ENCODE measurements at regions of chr12 and their contacts with region 1.

Region 1: DNA sequence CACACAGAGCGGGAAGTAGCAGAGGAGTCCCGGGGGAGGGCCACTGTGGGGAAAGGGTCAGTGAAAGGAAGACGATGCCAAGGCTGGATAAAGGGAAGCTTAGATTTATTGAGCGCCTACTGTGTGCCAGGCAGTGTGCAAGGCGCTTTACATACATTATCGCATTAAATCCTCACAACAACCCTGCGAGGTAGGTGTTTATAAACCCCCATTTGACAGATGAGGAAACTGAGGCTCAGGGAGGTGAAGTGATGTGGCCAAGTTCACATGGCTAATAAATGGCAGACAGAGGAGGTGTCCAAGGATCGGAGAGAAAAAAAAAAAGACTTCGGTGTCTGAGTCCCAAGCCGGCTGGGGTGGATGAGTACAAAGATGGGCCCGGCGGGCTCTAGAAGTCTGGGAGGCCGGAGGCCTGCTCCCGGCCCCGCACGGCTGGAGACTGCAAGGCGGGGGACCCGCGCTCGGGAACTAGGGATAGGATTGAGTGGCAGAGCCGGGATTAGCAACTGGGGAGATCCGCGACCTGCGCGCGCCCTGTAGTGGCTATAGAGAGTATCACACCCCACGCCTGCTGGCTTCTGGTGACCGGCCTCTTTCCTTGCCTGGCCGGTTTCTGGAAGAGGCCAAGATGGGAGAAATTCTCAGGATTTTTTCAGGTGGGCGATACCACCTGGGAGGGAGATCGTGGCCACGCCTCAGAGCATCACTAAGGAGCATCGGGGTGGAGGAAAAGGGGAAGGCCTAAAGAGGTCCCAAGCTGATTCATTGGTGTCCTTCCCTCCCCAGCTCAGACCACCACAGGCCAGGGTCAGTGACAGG is 3.9 kb downstream of the DDN start:
- DNase-seq: peak; percentile 93
- ATAC-seq: peak; percentile 69
- H3K4me3 Mint-ChIP-seq: peak overlapping the region; percentile 46
- H3K27ac Mint-ChIP-seq: no peak overlapping the region
- H3K4me1 Mint-ChIP-seq: peaks cover 24% of the 10 kb centered on the region
- H3K27me3 Mint-ChIP-seq: peaks cover 76% of the 10 kb centered on the region
- CTCF ChIP-seq: peak; percentile 58

Region 2: GRCh38 chr12:48890657-48891418 is 104.4 kb before region 1 on chr12:
- CTCF ChIA-PET with region 1: interaction called, 36 read pairs
- POLR2A ChIA-PET with region 1: no interaction called
- DNase-seq: peak; percentile 92
- ATAC-seq: peak; percentile 95
- H3K4me3 Mint-ChIP-seq: peak overlapping the region; percentile 70
- H3K27ac Mint-ChIP-seq: no peak overlapping the region
- H3K4me1 Mint-ChIP-seq: peaks cover 7% of the 10 kb centered on the region
- H3K27me3 Mint-ChIP-seq: peaks cover 28% of the 10 kb centered on the region
- CTCF ChIP-seq: peak; percentile 92

Region 3: DNA sequence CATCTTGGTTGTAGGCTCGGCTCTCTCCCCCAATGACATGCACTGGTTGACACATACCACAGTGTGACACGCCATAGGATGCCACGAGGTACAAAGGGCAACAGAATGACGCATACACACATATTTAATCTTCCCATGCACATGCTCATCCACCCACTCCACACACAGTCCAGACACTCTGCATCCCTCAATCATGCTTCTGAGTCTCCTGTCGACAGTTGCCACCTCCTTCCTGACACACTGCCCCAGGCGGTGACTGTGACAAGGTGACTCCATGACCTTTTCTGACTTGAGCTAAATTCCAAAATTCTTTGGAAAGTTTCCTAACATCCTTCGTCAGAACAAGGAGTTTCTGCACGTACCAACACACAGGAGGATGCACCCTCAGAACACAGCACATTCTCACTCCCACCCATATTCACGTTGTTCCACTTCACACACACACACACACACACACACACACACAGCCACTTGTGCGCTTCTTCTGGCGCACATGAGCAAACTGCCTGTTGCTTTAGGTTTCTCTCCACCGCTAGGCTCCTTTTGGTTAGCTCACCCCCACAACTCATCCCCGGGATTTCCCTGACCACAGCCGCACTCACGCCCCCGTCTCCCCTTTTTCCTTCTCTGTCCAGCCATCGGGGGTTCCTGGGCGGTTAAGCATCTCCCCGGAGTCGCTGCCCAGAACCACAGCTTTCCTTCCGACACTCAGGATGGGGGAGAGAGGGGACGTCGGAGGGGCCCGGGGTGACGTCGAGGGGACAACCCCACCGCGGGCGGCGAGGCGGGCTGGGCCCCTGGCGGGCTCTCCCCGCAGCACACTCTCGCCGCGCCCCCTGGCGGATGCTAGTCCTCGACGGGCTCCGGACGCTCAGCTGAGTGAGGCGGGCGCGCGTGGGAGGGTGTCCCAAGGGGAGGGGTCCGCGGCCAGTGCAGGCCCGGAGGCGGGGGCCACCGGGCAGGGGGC is 17.7 kb before region 1 on chr12:
- CTCF ChIA-PET with region 1: interaction called, 237 read pairs
- POLR2A ChIA-PET with region 1: interaction called, 3 read pairs
- DNase-seq: peak; percentile 75
- ATAC-seq: peak; percentile 3
- H3K4me3 Mint-ChIP-seq: peak overlapping the region; percentile 45
- H3K27ac Mint-ChIP-seq: no peak overlapping the region
- H3K4me1 Mint-ChIP-seq: peaks cover 31% of the 10 kb centered on the region
- H3K27me3 Mint-ChIP-seq: peaks cover 100% of the 10 kb centered on the region
- CTCF ChIP-seq: peak; percentile 77; the same call in 1 of the 2 replicates

Region 4: DNA sequence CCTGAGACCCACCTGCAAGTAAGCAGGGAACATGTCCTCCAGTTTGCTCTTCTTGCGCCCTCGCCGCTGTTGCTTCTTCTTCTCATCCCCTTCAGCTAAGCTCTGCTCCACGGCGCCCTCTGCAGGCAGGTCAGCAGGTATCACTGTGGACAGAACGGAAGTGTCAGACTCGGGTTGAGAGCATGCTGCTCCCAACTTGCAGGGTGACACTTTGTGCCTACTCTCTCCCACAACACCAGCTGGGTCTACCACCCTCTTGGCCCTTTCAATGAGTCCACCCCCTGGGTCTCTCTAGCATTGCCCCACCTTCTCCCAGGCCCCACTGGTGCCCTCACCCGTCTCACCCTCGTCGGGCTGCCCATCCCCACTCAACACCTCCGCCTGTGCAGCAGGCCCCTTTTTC is 48.6 kb after region 1 on chr12:
- CTCF ChIA-PET with region 1: interaction called, 37 read pairs
- POLR2A ChIA-PET with region 1: no interaction called
- DNase-seq: peak; percentile 91
- ATAC-seq: peak; percentile 86
- H3K4me3 Mint-ChIP-seq: no peak overlapping the region
- H3K27ac Mint-ChIP-seq: no peak overlapping the region
- H3K4me1 Mint-ChIP-seq: no peaks in the 10 kb centered on the region
- H3K27me3 Mint-ChIP-seq: no peaks in the 10 kb centered on the region
- CTCF ChIP-seq: peak; percentile 76

Region 5: DNA sequence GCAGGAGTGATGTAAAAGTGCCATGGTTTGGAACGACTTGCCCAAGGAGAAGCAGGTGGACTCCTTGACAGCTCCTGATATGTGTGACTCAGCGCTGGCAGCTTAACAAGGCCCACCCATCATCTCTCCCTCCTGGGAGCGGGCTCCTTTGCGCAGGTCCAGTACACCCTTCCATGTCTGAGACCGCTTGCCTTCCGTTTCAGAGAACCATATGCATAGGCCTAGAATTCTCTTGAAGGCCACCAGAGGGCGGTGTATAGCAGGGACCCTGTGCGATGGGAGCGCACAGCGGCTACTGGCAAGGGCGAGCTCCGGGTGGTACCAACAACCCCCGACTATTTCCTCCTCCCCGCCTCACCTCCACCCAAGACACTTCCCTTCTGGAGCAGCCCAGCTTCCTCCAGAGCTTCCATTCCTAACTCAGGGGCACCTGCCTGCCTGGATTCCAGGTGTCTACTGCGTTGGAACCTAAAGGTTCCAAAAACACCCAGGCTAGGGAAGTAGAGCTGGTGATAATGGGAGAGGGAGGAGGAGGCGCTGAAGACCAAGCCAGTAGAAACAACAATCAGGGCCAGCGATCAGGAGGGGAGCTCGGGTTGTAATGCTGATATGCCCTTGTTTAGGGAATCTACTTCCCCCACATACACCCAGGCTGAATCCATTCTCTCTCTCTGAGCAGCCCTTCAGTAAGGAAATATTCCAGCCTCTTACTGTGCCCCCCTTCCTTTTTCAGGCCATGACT is 93.1 kb after region 1 on chr12:
- CTCF ChIA-PET with region 1: interaction called, 41 read pairs
- POLR2A ChIA-PET with region 1: no interaction called
- DNase-seq: peak; percentile 75
- ATAC-seq: peak; percentile 78
- H3K4me3 Mint-ChIP-seq: peak overlapping the region; percentile 50
- H3K27ac Mint-ChIP-seq: no peak overlapping the region
- H3K4me1 Mint-ChIP-seq: peaks cover 40% of the 10 kb centered on the region
- H3K27me3 Mint-ChIP-seq: peaks cover 92% of the 10 kb centered on the region
- CTCF ChIP-seq: peak; percentile 83

Region 6: DNA sequence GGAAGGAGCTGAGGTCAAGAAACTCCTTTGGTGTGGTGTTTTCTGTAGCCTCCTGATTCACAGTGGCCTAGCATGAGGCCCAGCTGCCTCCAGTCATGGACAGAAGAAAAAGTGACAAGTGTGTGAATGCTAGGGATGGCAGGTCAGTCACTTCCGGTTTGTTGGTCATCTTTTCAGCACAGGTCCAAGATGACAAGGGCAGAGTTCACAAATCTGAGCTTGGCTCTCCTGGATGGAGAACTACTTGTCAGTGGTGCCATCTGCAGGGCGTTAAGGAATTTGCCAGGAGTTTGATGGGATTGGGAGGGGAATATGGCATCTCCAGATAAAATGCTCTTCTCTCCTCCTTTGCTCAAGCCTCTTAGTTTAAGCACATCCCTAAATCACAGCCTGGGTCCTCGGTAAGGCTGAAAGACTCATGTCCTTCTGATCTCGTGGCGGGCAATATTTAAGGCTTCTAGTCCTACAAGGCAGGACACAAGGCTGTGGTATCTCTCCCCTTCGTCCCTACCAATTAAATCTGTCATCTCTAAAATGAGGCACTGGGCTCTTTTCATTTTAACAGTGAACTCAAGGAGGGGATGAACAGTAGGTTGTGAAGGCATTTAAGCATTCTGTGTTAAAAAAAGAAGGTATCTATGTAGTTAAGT is 125.9 kb after region 1 on chr12:
- CTCF ChIA-PET with region 1: interaction called, 29 read pairs
- POLR2A ChIA-PET with region 1: no interaction called
- DNase-seq: peak; percentile 45
- ATAC-seq: peak; percentile 93
- H3K4me3 Mint-ChIP-seq: no peak overlapping the region
- H3K27ac Mint-ChIP-seq: no peak overlapping the region
- H3K4me1 Mint-ChIP-seq: no peaks in the 10 kb centered on the region
- H3K27me3 Mint-ChIP-seq: peaks cover 9% of the 10 kb centered on the region
- CTCF ChIP-seq: no peak

Measured in WTC11 (cell line).